Activated T-helper 2 cell treated with anti-CD3 and anti-CD28 coated beads, Interferon-gamma antibody, Interleukin-2, Interleukin-4, amounts not matched to agents 10 μg/mL and 5 μg/mL and 100 μg/mL, durations not matched to agents 14 hours and 24 hours and 36 hours (primary cell): ENCODE measurements at regions of chr5 and their contacts with region 1.

Region 1: DNA sequence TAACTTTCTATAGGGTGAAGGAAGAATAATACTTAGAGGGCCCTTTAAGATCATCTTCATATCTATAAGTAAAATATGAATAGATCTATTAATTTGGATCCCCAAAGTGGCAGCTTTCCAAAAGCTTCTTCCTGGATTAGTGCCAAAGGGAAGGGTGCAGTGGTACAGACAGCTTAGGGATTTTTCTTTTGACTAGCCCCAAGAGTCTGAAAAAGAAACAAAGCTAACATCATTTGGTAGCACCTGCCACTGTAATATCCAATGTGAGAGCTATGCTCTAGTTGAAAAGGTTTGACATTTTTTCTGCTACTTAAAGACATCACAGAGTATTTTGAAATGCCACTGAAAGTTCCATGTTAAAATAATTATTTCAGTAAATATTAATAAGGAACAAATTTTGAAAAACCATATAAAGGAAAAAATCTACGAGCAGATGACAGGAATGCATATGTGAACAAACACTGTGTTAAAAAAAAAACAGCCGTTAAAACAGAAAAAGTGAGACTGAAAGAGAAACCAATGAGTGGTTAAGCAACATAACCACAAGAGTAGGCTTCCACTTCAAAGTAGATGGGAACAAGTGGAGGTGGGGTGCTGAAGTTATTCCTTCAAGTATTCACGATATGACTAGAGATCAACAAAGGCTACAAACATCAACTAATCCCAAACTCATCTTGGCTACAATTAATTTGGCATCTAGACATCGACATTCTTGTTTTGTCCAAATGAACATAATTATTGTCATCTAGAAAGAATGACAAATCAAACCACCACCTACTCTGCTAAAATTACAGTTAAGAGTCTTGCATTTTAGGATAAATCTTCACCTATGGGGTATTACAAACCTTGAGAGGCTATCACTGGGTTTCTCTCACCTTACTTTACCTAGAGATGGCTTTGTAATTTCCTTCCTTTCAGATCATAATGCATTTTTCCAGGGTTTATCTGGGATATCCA is 137.5 kb downstream of the CPLANE1 start:
- DNase-seq: peak; percentile 36
- H3K4me3 Mint-ChIP-seq: no peak overlapping the region
- H3K27ac Mint-ChIP-seq: peak overlapping the region; percentile 70
- H3K4me1 Mint-ChIP-seq: peaks cover 37% of the 10 kb centered on the region
- H3K27me3 Mint-ChIP-seq: no peaks in the 10 kb centered on the region

Region 2: GRCh38 chr5:37054391-37054790 is 57.3 kb before region 1 on chr5:
- intact Hi-C with region 1: loop called (anchors 10 kb)
- DNase-seq: no peak
- H3K4me3 Mint-ChIP-seq: no peak overlapping the region
- H3K27ac Mint-ChIP-seq: no peak overlapping the region
- H3K4me1 Mint-ChIP-seq: peaks cover 17% of the 10 kb centered on the region
- H3K27me3 Mint-ChIP-seq: no peaks in the 10 kb centered on the region

Region 3: DNA sequence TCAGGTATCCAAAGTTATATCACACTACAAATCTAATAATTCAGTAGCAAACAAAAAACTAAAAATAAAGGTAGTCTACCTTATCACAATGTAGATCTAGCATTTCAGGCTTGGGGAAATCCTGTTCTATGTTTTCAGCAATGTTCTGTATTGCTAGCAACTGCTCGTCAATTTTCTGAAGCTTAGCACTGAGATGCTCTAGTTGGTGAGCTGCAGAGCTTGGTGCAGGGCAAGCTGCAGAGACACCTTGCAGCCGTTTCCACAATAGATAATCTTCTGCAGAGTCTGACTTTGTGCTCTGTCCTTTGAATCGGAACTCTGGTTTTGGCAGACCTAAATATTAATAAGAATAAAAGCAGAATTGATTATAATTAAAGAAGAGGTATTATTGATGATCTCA is 42.0 kb after region 1 on chr5:
- intact Hi-C with region 1: no loop called
- DNase-seq: no peak
- H3K4me3 Mint-ChIP-seq: no peak overlapping the region
- H3K27ac Mint-ChIP-seq: no peak overlapping the region
- H3K4me1 Mint-ChIP-seq: peaks cover 3% of the 10 kb centered on the region
- H3K27me3 Mint-ChIP-seq: no peaks in the 10 kb centered on the region

Region 4: GRCh38 chr5:37197340-37198050 is 85.8 kb after region 1 on chr5:
- intact Hi-C with region 1: loop called (anchors 5 kb)
- DNase-seq: no peak
- H3K4me3 Mint-ChIP-seq: peak overlapping the region; percentile 46
- H3K27ac Mint-ChIP-seq: peak overlapping the region; percentile 49
- H3K4me1 Mint-ChIP-seq: peaks cover 24% of the 10 kb centered on the region
- H3K27me3 Mint-ChIP-seq: no peaks in the 10 kb centered on the region

Region 5: DNA sequence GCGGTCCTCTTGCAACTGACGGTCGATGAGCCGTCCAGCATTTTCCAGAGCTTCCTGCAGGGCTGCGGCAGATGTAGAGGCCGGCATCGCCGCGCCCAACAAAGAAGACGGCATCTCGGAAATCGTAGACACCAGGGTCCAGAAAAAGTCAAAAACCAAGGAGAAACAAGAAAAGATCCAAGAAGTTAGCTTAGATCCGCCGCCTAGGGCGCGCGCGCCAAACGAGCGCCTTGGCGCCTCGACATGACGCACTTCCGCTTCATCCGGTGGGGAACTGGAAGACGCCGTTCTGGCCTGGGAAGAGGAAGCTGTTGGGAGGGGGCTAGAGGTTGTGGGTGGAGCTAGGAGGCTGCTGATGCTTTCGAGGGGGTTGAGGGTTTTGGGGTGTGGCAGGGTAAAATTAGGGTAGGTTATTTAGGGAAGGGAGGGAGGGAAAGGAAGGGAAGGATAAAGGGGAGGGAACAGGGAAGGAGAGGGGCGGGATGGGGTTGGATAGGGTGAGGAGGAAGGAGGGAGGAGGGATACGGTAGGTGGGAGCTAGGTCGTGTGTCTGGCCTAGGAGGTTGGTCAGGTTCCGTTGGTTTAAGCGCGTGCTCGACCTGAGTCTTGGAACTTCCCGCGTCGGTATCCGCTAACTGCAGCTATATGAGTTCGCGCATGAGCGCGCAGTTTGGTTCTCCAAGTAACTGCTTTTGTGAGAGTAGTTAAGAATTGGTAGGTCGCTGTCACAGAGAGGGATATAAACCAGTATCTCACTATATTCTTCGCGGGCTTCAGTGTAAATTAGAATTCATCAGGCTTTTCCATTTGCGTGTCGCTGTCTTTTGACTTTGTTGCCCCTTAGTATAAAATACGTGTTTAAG is 259.4 kb after region 1 on chr5 and contains the start of gene NUP155:
- intact Hi-C with region 1: loop called (anchors 5 kb)
- DNase-seq: peak; percentile 86
- H3K4me3 Mint-ChIP-seq: peak within 1 kb of the TSS; percentile 93
- H3K27ac Mint-ChIP-seq: peak within 1 kb of the TSS; percentile 92
- H3K4me1 Mint-ChIP-seq: peaks cover 22% of the 10 kb centered on the region
- H3K27me3 Mint-ChIP-seq: no peaks in the 10 kb centered on the region
- total RNA-seq, gene NUP155: 66.8 and 69.8 TPM in 2 replicates